WTC11 (cell line): ENCODE measurements at regions of chr7 and their contacts with region 1.

Region 1: GRCh38 chr7:88835147-88835728 is 39.7 kb upstream of the TEX47 start:
- DNase-seq: no peak
- ATAC-seq: peak; percentile 68
- H3K4me3 Mint-ChIP-seq: no peak overlapping the region
- H3K27ac Mint-ChIP-seq: no peak overlapping the region
- H3K4me1 Mint-ChIP-seq: no peaks in the 10 kb centered on the region
- H3K27me3 Mint-ChIP-seq: no peaks in the 10 kb centered on the region
- CTCF ChIP-seq: peak; percentile 30; the same call in 1 of the 2 replicates

Region 2: DNA sequence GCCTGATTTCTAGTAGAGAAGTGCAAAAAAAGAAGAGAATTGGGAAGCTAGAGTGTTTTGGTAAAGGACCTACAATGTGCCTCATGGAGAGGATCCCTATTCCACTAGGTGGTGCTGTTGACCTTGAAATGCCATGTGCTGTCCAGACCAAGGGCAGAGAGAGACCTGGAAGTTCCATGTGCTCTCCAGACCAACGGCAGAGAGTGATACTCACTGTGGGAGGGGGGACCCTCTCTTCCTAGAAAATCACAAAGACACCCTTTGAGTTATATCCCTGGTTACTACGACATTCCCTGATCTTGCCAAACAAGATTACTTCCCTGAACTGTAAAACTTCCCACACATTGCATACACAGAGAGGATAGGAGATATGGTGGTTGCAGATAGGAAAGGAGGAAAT is 288.4 kb before region 1 on chr7:
- CTCF ChIA-PET with region 1: interaction called, 10 read pairs
- POLR2A ChIA-PET with region 1: no interaction called
- DNase-seq: peak; percentile 48
- ATAC-seq: peak; percentile 81
- H3K4me3 Mint-ChIP-seq: no peak overlapping the region
- H3K27ac Mint-ChIP-seq: no peak overlapping the region
- H3K4me1 Mint-ChIP-seq: no peaks in the 10 kb centered on the region
- H3K27me3 Mint-ChIP-seq: 0 out of 2 replicates have a peak, but pooled peaks cover 2% of the 10 kb centered on the region
- CTCF ChIP-seq: peak; percentile 67

Region 3: DNA sequence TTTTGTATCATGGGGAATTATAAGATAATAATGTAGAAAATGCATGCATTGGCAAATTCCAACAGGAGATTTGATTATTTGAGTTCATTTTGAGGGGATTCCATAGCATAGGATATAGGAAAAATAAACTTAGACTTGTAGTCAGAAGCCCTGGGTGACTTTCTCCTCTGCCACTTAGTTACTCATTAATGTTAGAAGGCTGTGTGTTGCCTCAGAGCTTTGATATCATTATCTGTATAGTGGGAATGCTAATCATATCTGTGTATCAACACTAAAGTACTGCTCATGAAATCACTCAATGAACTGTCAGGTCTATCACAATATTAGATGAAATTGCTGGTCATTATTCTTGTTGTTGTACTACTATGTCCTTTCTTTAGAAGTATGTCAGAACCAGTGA is 16.7 kb before region 1 on chr7:
- CTCF ChIA-PET with region 1: no interaction called
- POLR2A ChIA-PET with region 1: no interaction called
- DNase-seq: no peak
- ATAC-seq: no peak
- H3K4me3 Mint-ChIP-seq: no peak overlapping the region
- H3K27ac Mint-ChIP-seq: no peak overlapping the region
- H3K4me1 Mint-ChIP-seq: no peaks in the 10 kb centered on the region
- H3K27me3 Mint-ChIP-seq: no peaks in the 10 kb centered on the region
- CTCF ChIP-seq: no peak

Region 4: DNA sequence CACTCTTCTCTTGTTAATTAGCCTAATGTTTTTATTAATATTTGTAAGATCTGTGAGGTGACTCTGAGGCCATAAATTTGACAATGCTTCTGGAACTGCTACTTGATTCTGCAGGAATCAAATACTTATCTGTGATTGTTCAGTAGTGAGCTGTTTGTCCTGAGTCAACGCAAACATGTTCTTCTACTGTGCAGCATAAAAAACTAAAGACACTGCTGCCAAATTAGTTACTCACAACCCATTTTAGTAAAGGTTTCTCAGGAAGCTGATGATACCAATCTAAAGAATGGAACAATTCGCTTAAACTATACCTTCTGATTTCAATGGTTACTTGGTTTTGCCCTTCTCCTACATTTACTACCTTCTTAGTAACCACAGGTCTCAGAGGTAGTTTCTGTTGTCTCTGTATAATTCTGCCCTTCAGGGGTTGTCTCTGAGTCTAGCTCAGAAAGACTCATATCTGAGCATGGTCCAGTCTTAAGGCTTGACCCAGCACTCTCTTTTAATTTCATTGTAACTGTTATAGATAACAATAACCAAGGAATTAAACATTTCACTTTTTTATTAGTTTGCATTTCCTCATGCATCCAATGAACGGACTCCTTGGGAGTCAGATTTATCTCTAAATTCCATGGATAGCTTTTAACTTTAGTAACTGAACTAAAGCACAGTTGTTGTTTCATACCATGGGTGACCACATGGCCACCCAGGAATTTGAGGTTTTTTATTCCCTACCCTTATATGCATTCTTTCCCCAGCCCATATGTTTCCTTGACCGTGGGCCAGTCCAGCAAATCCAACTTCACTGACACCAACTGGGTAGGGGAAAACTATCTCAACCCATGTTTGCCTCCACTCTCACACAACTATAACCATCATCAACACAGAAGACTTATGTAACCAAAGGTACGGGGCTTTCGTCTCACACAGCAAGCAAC is 269.8 kb after region 1 on chr7:
- CTCF ChIA-PET with region 1: no interaction called
- POLR2A ChIA-PET with region 1: no interaction called
- DNase-seq: no peak
- ATAC-seq: no peak
- H3K4me3 Mint-ChIP-seq: no peak overlapping the region
- H3K27ac Mint-ChIP-seq: no peak overlapping the region
- H3K4me1 Mint-ChIP-seq: peaks cover 48% of the 10 kb centered on the region
- H3K27me3 Mint-ChIP-seq: no peaks in the 10 kb centered on the region
- CTCF ChIP-seq: no peak